Activated CD8-positive, alpha-beta memory T cell treated with anti-CD3 and anti-CD28 coated beads, Interleukin-2, amount 10 ng/mL, durations not matched to agents 7 days and 5 days (primary cell): ENCODE measurements at regions of chr9 and their contacts with region 1.

Region 1: GRCh38 chr9:123349691-123350480 is 6.1 kb upstream of the CRB2 start:
- DNase-seq: peak; percentile 74
- ATAC-seq: peak; percentile 81
- H3K4me3 Mint-ChIP-seq: no peak overlapping the region
- H3K27ac Mint-ChIP-seq: no peak overlapping the region
- H3K4me1 Mint-ChIP-seq: peaks cover 3% of the 10 kb centered on the region
- H3K27me3 Mint-ChIP-seq: peaks cover 12% of the 10 kb centered on the region

Region 2: GRCh38 chr9:122904823-122905710 is 444.8 kb before region 1 on chr9 and contains the start of gene RC3H2:
- CTCF ChIA-PET with region 1: interaction called, 10 read pairs
- DNase-seq: peak; percentile 99
- ATAC-seq: peak; percentile 90
- H3K4me3 Mint-ChIP-seq: peak within 1 kb of the TSS; percentile 88
- H3K27ac Mint-ChIP-seq: peak within 1 kb of the TSS; percentile 88
- H3K4me1 Mint-ChIP-seq: peaks cover 18% of the 10 kb centered on the region
- H3K27me3 Mint-ChIP-seq: no peaks in the 10 kb centered on the region
- total RNA-seq, gene RC3H2: 49.7 to 53.7 TPM

Region 3: DNA sequence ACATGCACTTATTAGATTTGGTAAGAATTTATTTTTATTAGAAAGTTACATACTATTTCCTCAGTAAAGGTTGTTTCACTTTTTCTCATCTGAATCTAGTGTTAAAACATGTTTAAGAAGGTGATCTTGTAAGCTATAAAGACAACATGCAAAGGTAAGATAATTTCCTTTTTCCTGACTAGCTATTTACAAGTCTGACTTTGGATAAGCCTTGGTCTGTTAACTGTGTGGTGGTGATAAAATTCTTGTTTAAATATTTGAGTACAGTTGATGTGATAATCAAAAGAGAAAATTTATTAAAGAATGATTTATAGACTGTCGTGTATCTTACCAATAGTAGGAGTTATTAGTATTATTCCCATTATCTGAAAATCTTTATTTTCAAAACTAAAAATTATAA is 353.3 kb before region 1 on chr9:
- CTCF ChIA-PET with region 1: interaction called, 18 read pairs
- DNase-seq: no peak
- ATAC-seq: no peak
- H3K4me3 Mint-ChIP-seq: no peak overlapping the region
- H3K27ac Mint-ChIP-seq: no peak overlapping the region
- H3K4me1 Mint-ChIP-seq: peaks cover 6% of the 10 kb centered on the region
- H3K27me3 Mint-ChIP-seq: no peaks in the 10 kb centered on the region

Region 4: GRCh38 chr9:123093141-123093540 is 256.7 kb before region 1 on chr9:
- CTCF ChIA-PET with region 1: interaction called, 14 read pairs
- DNase-seq: no peak
- ATAC-seq: no peak
- H3K4me3 Mint-ChIP-seq: no peak overlapping the region
- H3K27ac Mint-ChIP-seq: no peak overlapping the region
- H3K4me1 Mint-ChIP-seq: no peaks in the 10 kb centered on the region
- H3K27me3 Mint-ChIP-seq: no peaks in the 10 kb centered on the region

Region 5: DNA sequence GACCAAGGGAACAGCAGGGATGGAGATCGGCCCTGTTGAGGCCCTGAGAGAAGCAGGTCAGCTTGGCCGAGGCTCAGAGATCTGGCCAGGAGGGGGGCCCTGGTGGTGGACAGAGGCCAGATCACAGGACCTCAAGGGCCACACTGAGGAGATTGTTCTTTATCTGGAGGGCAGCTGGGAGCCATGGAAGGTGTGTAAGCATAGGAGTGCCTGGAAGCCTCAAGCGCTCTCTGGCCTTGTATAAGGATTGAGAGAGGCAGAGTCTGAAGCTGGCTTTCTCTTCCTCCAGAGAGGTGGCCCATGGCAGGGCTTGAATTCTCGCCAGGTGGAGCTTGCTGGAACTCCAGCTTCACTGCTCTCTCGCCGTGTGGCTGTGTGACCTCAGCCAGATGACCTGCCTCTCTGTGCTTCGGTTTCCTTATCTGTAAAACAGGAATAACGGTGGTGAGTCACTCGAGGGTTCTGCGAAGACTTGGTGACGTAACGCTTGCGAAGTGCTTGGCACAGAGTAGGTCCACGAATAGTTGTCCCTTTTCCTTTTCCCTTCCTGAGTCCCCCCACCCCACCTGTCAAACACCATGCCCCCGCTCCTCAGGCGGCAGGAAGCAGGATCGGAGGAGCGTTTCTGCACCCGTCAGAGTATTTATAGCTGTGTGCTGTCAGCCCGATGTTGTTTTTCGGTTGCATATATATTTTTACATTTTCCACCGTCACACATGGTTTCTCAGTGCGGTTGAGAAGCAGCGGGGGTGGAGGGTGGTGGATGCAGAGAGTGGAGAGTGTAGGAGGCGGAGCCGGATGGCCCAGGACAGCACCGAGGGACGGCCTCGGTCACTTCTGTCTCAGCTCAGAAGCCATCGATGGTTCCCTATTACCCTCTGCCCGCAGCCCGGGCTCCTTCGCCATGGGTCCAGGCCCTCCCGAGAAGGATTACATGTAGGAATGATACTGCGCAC is 10.9 kb before region 1 on chr9:
- CTCF ChIA-PET with region 1: interaction called, 31 read pairs
- DNase-seq: peak; percentile 87
- ATAC-seq: peak; percentile 80
- H3K4me3 Mint-ChIP-seq: peak overlapping the region; percentile 76
- H3K27ac Mint-ChIP-seq: peak overlapping the region; percentile 97
- H3K4me1 Mint-ChIP-seq: peaks cover 36% of the 10 kb centered on the region
- H3K27me3 Mint-ChIP-seq: no peaks in the 10 kb centered on the region